ENCODE measurements at regions of chr1 and their contacts with region 1.

Region 1: DNA sequence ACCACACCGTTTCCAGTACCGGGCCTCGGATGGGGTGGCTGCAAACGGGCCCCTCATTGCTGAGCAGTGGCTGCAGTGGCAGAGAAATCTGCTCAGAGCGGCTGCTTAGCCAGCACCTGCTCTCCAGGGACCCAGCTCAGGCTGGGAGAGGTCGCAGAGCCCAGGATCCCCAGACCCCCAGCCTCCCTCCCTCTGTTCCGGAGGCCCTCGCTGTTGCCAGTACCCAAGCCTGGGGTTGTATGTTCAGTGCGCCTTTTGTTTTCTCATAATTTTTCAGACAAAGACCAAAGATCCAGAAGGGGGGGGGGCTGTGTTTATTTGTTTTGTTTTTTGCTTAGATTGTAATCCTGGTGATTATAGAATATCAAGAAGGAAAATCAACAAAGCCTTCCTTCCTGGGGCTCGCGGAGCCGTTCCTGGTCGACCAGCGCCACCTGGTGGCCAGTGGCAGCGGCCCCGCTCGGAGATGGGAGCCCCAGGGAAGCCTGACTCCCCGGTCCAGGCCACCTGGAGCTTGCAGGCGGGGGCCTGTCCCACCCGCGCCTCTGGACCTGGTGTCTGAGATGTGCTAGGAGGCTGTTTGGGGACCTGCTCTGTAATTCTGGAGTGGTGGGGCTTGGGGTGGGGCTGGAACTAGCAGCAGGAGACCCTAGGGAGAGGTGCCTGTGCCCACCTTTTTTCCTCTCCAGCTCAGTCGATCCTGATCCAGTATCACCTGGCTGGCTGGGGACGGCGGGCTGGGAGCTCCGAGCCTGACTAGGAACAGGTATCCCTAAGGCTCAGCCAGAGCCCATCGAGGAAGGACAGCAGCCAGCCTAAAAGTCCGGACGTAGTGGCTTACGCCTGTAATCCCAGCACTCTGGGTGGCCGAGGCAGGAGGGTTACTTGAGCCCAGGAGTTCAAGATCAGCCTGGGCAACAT is 123.9 kb upstream of the VAMP3 start:
- DNase-seq: peak; percentile 34 to 80 (median 64)
- ATAC-seq: no peak
- H3K4me3 ChIP-seq: no peak overlapping the region
- H3K4me3 Mint-ChIP-seq: no peak overlapping the region
- H3K27ac ChIP-seq: no peak overlapping the region
- H3K27ac Mint-ChIP-seq: no peak overlapping the region
- H3K4me1 ChIP-seq: no peaks in the 10 kb centered on the region
- H3K4me1 Mint-ChIP-seq: no peaks in the 10 kb centered on the region
- H3K27me3 ChIP-seq: no peaks in the 10 kb centered on the region
- H3K27me3 Mint-ChIP-seq: no peaks in the 10 kb centered on the region
- CTCF ChIP-seq: peak; percentile 88

Region 2: DNA sequence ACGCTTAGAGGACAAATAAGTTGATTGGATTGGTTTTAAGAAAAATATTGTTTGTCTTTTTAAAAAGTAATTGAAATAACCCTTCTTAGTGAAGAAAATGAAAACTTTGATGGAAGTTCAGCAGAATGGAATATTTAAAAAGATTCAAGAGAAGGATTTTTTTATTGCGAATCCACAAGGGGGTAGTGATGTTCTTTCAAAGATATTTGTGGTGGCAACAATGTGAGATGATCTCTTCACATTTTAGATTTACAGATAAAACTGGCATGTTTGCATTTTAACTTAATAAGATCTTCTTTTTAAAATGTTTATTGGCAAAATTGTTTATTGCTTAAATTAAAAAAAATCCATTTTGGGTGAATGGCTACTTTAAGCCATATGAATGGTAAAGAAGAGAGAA is 853.1 kb before region 1 on chr1:
- CTCF ChIA-PET with region 1: no interaction called
- POLR2A ChIA-PET with region 1: no interaction called
- intact Hi-C with region 1: loop called in 1 of 2 experiments (anchors 1 kb)
- DNase-seq: peak in 2 of 9 experiments; percentile 39 to 58
- ATAC-seq: no peak
- H3K4me3 ChIP-seq: no peak overlapping the region
- H3K4me3 Mint-ChIP-seq: no peak overlapping the region
- H3K27ac ChIP-seq: no peak overlapping the region
- H3K27ac Mint-ChIP-seq: no peak overlapping the region
- H3K4me1 ChIP-seq: no peaks in the 10 kb centered on the region
- H3K4me1 Mint-ChIP-seq: peaks cover 47% of the 10 kb centered on the region
- H3K27me3 ChIP-seq: no peaks in the 10 kb centered on the region
- H3K27me3 Mint-ChIP-seq: no peaks in the 10 kb centered on the region
- CTCF ChIP-seq: peak; percentile 45

Region 3: GRCh38 chr1:7042322-7043190 is 604.7 kb before region 1 on chr1:
- CTCF ChIA-PET with region 1: interaction called, 6 read pairs
- POLR2A ChIA-PET with region 1: no interaction called
- intact Hi-C with region 1: loop called in 1 of 2 experiments (anchors 5 kb)
- DNase-seq: peak in 1 of 9 experiments; percentile 27
- ATAC-seq: no peak
- H3K4me3 ChIP-seq: no peak overlapping the region
- H3K4me3 Mint-ChIP-seq: no peak overlapping the region
- H3K27ac ChIP-seq: no peak overlapping the region
- H3K27ac Mint-ChIP-seq: no peak overlapping the region
- H3K4me1 ChIP-seq: no peaks in the 10 kb centered on the region
- H3K4me1 Mint-ChIP-seq: no peaks in the 10 kb centered on the region
- H3K27me3 ChIP-seq: no peaks in the 10 kb centered on the region
- H3K27me3 Mint-ChIP-seq: peaks cover 6% of the 10 kb centered on the region
- CTCF ChIP-seq: peak; percentile 25

Region 4: DNA sequence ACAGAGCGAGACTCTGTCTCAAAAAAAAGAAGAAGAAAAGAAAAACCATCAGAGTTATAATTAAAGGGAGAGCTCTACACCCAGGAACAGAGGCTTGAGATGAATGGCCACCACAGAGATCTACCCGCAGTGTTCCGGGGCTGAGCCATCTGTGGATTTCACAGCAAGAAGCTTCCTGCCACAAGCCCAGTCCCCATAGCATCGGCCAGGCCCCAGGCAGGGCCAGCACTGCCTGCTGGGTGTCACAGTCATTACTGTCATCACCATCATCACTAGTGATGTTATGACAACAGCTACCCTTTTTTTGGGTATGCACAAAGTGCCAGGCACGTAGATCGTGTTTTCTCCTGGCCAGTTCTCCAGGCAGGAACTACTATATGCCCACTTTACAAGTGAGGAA is 12.3 kb after region 1 on chr1:
- CTCF ChIA-PET with region 1: interaction called, 16 read pairs
- POLR2A ChIA-PET with region 1: no interaction called
- intact Hi-C with region 1: no loop called
- DNase-seq: no peak
- ATAC-seq: no peak
- H3K4me3 ChIP-seq: no peak overlapping the region
- H3K4me3 Mint-ChIP-seq: no peak overlapping the region
- H3K27ac ChIP-seq: no peak overlapping the region
- H3K27ac Mint-ChIP-seq: no peak overlapping the region
- H3K4me1 ChIP-seq: no peaks in the 10 kb centered on the region
- H3K4me1 Mint-ChIP-seq: no peaks in the 10 kb centered on the region
- H3K27me3 ChIP-seq: no peaks in the 10 kb centered on the region
- H3K27me3 Mint-ChIP-seq: no peaks in the 10 kb centered on the region
- CTCF ChIP-seq: no peak